ENCODE measurements at regions of chr19 and their contacts with region 1.

Region 1: DNA sequence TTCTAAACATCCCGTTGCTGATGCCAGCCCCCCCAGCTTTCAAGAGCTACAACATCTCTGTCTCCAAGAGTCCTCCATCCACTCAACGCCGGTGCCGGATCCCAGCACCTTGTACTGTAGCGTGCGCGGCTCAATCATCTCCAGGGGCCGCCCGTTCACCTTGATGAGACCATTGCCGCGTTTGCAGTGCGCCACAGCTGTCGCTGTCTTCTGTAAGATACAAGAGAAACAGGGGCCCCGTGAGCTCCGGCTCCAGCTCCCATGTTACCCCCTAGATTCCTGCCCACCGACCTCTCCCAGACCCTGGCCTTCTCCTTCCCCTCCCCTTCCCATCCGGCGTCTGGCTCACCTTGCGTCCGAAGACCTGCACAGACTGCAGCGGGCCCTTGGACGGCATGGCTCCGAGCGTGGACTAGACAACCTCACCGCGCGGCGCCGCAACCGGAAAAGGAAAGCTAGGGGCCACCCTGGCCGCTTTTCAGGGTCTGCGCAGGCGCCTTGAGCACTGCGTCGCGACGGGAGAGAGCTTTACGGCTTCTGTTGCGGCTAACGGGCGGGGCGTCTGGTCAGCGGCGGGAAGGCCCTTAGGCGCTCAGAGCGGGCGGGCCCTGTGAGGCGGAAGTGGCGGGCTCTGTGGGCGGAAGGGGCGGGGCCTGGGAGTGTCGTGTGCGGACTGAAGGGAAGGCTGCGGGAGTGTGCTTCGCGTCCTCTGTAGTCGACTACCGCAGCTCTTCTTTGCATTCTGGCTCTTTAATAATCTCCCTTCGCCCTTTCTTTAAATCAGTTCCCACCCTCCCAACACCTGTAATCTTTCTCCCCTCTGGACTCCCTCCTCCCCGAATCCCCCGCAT is at the start of gene RPS16:
- DNase-seq: peak; percentile 97 to 99 (median 99)
- ATAC-seq: peak; percentile 86
- H3K4me3 ChIP-seq: peak within 1 kb of the TSS; percentile 96
- H3K4me3 Mint-ChIP-seq: peak within 1 kb of the TSS; percentile 99
- H3K27ac ChIP-seq: peak within 1 kb of the TSS; percentile 87 to 90
- H3K27ac Mint-ChIP-seq: peak within 1 kb of the TSS; percentile 93
- H3K4me1 ChIP-seq: peaks cover 55% of the 10 kb centered on the region
- H3K4me1 Mint-ChIP-seq: peaks cover 54% of the 10 kb centered on the region
- H3K27me3 ChIP-seq: no peaks in the 10 kb centered on the region
- H3K27me3 Mint-ChIP-seq: no peaks in the 10 kb centered on the region
- CTCF ChIP-seq: no peak
- total RNA-seq, gene RPS16: 4,625 to 4,839 TPM

Region 2: GRCh38 chr19:39335168-39335548 is 100.6 kb before region 1 on chr19:
- CTCF ChIA-PET with region 1: no interaction called
- POLR2A ChIA-PET with region 1: interaction called, 14 read pairs
- intact Hi-C with region 1: loop called in 1 of 2 experiments (anchors 5 kb)
- DNase-seq: peak in 8 of 14 experiments; percentile 10 to 63 (median 32)
- ATAC-seq: peak; percentile 45
- H3K4me3 ChIP-seq: peak overlapping the region; percentile 99
- H3K4me3 Mint-ChIP-seq: peak overlapping the region; percentile 98
- H3K27ac ChIP-seq: peak overlapping the region; percentile 93 to 94
- H3K27ac Mint-ChIP-seq: peak overlapping the region; percentile 95
- H3K4me1 ChIP-seq: peaks cover 76% of the 10 kb centered on the region
- H3K4me1 Mint-ChIP-seq: peaks cover 65% of the 10 kb centered on the region
- H3K27me3 ChIP-seq: no peaks in the 10 kb centered on the region
- H3K27me3 Mint-ChIP-seq: no peaks in the 10 kb centered on the region
- CTCF ChIP-seq: no peak

Region 3: DNA sequence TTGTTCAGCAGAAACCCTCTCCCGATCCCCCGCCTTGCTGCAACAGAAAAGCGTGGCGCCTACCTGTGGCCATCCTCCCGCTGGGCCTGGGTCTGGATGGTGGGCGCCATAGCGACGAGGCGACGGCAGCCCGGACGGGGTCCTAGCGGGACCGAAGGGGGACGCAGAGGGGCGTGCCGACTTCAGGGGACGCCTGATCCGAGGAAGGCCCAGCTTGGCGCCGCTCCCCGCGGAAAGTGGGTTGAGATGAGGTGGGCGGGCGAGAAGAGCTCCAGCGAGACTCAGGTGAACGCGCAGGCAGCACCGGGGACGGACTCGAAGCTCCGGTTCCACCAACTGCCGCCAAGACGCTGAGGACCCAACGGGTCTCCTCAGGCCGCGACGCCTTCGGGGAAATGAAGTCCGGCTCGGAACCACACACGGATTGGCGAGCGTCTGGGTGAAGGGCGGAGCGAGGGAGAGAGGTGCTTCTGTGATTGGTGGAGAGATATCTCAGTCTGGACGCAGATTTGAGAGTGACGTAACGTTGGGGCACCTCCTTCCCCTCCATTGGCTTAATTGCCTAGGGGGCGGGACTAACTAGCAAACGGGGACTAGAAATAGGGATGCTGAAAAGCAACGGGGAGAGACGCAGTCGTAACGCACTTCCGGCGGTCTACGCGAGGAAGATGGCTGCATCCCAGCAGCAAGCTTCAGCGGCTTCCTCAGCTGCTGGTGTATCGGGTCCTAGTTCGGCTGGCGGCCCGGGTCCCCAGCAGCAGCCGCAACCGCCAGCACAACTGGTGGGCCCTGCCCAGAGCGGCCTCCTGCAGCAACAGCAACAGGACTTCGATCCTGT is 44.8 kb before region 1 on chr19 and contains the starts of genes MED29 and PAF1:
- CTCF ChIA-PET with region 1: interaction called, 6 read pairs
- POLR2A ChIA-PET with region 1: interaction called, 94 read pairs
- intact Hi-C with region 1: loop called (anchors 1 to 2 kb)
- DNase-seq: peak; percentile 91 to 100 (median 94)
- ATAC-seq: peak; percentile 90
- H3K4me3 ChIP-seq: peak within 1 kb of the TSS; percentile 91
- H3K4me3 Mint-ChIP-seq: peak within 1 kb of the TSS; percentile 90
- H3K27ac ChIP-seq: peak within 1 kb of the TSS; percentile 98 to 100
- H3K27ac Mint-ChIP-seq: peak within 1 kb of the TSS; percentile 96
- H3K4me1 ChIP-seq: peaks cover 44% of the 10 kb centered on the region
- H3K4me1 Mint-ChIP-seq: peaks cover 33% of the 10 kb centered on the region
- H3K27me3 ChIP-seq: no peaks in the 10 kb centered on the region
- H3K27me3 Mint-ChIP-seq: no peaks in the 10 kb centered on the region
- CTCF ChIP-seq: no peak
- total RNA-seq, gene MED29: 45.0 to 46.1 TPM
- total RNA-seq, gene PAF1: 99.6 to 101 TPM

Region 4: DNA sequence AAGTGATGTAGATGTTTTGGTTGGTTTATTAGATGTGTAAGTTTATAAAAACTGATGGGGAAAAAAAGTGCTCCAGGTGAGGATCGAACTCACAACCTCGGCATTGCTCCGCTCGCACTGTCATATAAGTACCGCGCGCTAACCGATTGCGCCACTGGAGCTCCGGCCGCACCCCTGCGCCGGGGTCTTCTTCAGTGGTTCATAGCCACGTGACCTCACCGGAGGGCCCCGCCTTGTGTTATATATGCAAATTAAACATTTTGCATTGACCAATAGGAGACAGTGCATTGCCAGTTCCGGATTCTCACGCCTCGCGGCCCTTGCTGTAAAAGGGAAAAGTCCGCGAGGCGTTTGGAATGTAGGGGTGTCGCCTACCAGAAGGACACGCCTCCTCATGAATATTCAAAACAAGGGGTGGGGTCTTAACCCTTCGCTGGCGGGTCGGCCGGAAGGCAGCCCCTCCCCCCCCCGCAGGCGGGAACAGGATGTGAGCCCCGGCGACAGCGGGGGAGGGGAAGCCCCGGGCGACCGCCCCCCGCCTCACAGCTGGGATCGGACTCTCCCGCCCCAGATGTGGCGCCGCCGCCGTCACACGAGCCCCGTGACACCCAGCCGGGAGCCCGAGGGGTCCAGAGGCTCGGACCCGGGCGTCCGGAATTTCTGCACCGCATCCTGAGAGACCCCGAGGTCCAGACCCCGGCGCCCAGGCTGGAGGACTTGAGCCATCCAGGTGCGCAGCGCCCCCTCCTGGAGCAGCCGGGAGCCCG is 23.4 kb before region 1 on chr19 and contains the start of gene PLEKHG2:
- CTCF ChIA-PET with region 1: interaction called, 14 read pairs
- POLR2A ChIA-PET with region 1: interaction called, 61 read pairs
- intact Hi-C with region 1: loop called (anchors 1 kb)
- DNase-seq: peak; percentile 94 to 100 (median 97)
- ATAC-seq: peak; percentile 61
- H3K4me3 ChIP-seq: peak within 1 kb of the TSS; percentile 100
- H3K4me3 Mint-ChIP-seq: peak within 1 kb of the TSS; percentile 95
- H3K27ac ChIP-seq: peak within 1 kb of the TSS; percentile 100
- H3K27ac Mint-ChIP-seq: peak within 1 kb of the TSS; percentile 98
- H3K4me1 ChIP-seq: peaks cover 72% of the 10 kb centered on the region
- H3K4me1 Mint-ChIP-seq: peaks cover 41% of the 10 kb centered on the region
- H3K27me3 ChIP-seq: no peaks in the 10 kb centered on the region
- H3K27me3 Mint-ChIP-seq: peaks cover 12% of the 10 kb centered on the region
- CTCF ChIP-seq: peak; percentile 80
- total RNA-seq, gene PLEKHG2: 80.6 to 81.4 TPM

Region 5: GRCh38 chr19:39532233-39533002 is 96.7 kb after region 1 on chr19 and contains the start of gene EID2B:
- CTCF ChIA-PET with region 1: interaction called, 3 read pairs
- POLR2A ChIA-PET with region 1: interaction called, 16 read pairs
- intact Hi-C with region 1: loop called (anchors 1 kb)
- DNase-seq: peak; percentile 87 to 99 (median 94)
- ATAC-seq: peak; percentile 95
- H3K4me3 ChIP-seq: peak within 1 kb of the TSS; percentile 79
- H3K4me3 Mint-ChIP-seq: peak within 1 kb of the TSS; percentile 96
- H3K27ac ChIP-seq: peak within 1 kb of the TSS in 1 of 2 donors; percentile 74
- H3K27ac Mint-ChIP-seq: peak within 1 kb of the TSS; percentile 86
- H3K4me1 ChIP-seq: peaks cover 15% of the 10 kb centered on the region
- H3K4me1 Mint-ChIP-seq: peaks cover 39% of the 10 kb centered on the region
- H3K27me3 ChIP-seq: no peaks in the 10 kb centered on the region
- H3K27me3 Mint-ChIP-seq: no peaks in the 10 kb centered on the region
- CTCF ChIP-seq: peak; percentile 97
- total RNA-seq, gene EID2B: 5.0 to 5.1 TPM

Region 6: DNA sequence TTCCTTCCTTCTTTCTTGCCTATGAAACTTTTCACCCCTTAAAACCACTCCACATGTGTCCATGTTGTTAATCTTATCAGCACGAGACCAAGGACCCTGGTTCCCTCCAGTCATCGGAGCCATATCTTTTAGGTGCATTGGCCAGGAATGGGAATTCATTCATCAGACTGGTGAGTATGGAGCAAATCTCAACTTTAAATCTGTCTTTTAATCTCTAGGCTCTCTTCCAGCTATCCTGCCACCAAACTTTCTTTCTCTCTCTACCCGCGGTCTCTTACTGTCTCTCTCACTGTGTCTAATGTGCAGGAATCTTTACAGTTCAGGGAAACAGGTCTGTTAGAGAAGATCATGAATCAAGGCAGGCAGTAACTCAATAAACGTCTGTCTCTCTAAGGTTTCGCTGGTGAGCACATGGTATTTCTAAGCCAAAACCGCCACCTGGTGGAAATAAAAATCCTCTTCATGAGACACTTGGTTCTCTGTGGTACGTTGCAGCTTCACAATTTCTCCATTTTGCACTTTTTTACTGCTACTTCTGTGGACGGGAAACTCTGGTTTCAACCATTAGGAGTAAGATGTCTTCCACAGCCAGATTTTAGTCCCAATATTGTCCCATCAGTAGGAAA is 236.1 kb after region 1 on chr19:
- CTCF ChIA-PET with region 1: no interaction called
- POLR2A ChIA-PET with region 1: interaction called, 10 read pairs
- intact Hi-C with region 1: loop called (anchors 1 to 2 kb)
- DNase-seq: peak in 10 of 14 experiments; percentile 19 to 81 (median 45)
- ATAC-seq: peak; percentile 83
- H3K4me3 ChIP-seq: no peak overlapping the region
- H3K4me3 Mint-ChIP-seq: no peak overlapping the region
- H3K27ac ChIP-seq: no peak overlapping the region
- H3K27ac Mint-ChIP-seq: peak overlapping the region; percentile 2
- H3K4me1 ChIP-seq: peaks cover 20% of the 10 kb centered on the region
- H3K4me1 Mint-ChIP-seq: peaks cover 26% of the 10 kb centered on the region
- H3K27me3 ChIP-seq: no peaks in the 10 kb centered on the region
- H3K27me3 Mint-ChIP-seq: peaks cover 11% of the 10 kb centered on the region
- CTCF ChIP-seq: peak; percentile 69